ENCODE measurements at regions of chr6 and their contacts with region 1.

Region 1: GRCh38 chr6:144215932-144216667 is 65.8 kb downstream of the STX11 start:
- DNase-seq: peak; percentile 94
- ATAC-seq: peak; percentile 82
- H3K4me3 ChIP-seq: peak overlapping the region; percentile 72
- H3K27ac ChIP-seq: peak overlapping the region; percentile 61
- H3K4me1 ChIP-seq: peaks cover 15% of the 10 kb centered on the region
- H3K27me3 ChIP-seq: no peaks in the 10 kb centered on the region
- CTCF ChIP-seq: peak; percentile 66

Region 2: GRCh38 chr6:144104898-144105487 is 111.1 kb before region 1 on chr6:
- CTCF ChIA-PET with region 1: interaction called, 3 read pairs
- POLR2A ChIA-PET with region 1: no interaction called
- intact Hi-C with region 1: loop called (anchors 1 kb)
- DNase-seq: peak; percentile 81
- ATAC-seq: peak; percentile 79
- H3K4me3 ChIP-seq: no peak overlapping the region
- H3K27ac ChIP-seq: no peak overlapping the region
- H3K4me1 ChIP-seq: no peaks in the 10 kb centered on the region
- H3K27me3 ChIP-seq: no peaks in the 10 kb centered on the region
- CTCF ChIP-seq: peak; percentile 80

Region 3: GRCh38 chr6:144190593-144190992 is 25.5 kb before region 1 on chr6:
- CTCF ChIA-PET with region 1: no interaction called
- POLR2A ChIA-PET with region 1: no interaction called
- intact Hi-C with region 1: loop called (anchors 1 kb)
- DNase-seq: peak; percentile 77
- ATAC-seq: peak; percentile 99
- H3K4me3 ChIP-seq: no peak overlapping the region
- H3K27ac ChIP-seq: no peak overlapping the region
- H3K4me1 ChIP-seq: peaks cover 16% of the 10 kb centered on the region
- H3K27me3 ChIP-seq: no peaks in the 10 kb centered on the region
- CTCF ChIP-seq: no peak; the same call in 1 of the 2 replicates

Region 4: DNA sequence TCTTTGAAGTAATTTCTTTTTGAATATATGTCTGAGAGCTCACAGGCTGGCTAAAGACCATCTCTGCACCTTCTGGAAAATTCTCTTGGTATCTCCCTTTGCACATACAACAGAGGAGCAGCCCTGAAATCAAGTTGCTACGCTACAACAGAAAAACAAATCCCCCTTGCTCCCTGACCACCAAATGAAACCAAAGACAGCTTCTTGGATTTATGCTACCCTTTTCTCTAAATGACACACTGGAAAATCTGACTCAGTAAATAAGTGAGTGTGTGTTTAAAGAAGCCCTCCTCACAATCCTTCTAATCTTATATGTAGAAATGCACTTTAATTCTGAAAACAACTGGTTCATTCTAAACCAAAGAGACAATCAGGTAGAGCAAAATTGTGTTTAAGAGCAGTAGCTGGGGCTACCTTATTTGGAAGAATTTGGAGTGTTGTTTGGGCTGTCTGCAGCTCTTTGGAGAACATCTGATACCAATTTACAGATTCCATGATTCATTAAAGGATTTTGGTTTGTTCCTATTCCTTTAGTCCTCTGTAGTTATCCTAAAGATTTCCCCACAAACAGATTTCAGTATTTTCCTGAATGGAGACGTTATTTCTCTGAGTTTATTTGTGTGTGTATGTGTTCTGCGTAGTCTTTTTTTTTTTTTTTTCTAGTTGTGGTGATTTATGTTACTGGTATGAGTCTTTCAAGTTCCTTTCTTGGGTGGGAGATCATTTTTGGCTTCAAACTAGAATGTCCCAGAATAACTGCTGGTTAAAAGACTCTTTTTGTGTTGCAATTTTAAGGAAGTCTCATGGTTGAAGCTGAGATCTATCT is 32.6 kb after region 1 on chr6:
- CTCF ChIA-PET with region 1: no interaction called
- POLR2A ChIA-PET with region 1: no interaction called
- intact Hi-C with region 1: no loop called
- DNase-seq: peak; percentile 7
- ATAC-seq: no peak
- H3K4me3 ChIP-seq: no peak overlapping the region
- H3K27ac ChIP-seq: no peak overlapping the region
- H3K4me1 ChIP-seq: no peaks in the 10 kb centered on the region
- H3K27me3 ChIP-seq: no peaks in the 10 kb centered on the region
- CTCF ChIP-seq: no peak

Region 5: GRCh38 chr6:144265390-144265789 is 49.3 kb after region 1 on chr6:
- CTCF ChIA-PET with region 1: interaction called, 8 read pairs
- POLR2A ChIA-PET with region 1: no interaction called
- intact Hi-C with region 1: loop called (anchors 5 kb)
- DNase-seq: peak; percentile 82
- ATAC-seq: peak; percentile 35
- H3K4me3 ChIP-seq: peak overlapping the region; percentile 47
- H3K27ac ChIP-seq: peak overlapping the region; percentile 85
- H3K4me1 ChIP-seq: peaks cover 35% of the 10 kb centered on the region
- H3K27me3 ChIP-seq: no peaks in the 10 kb centered on the region
- CTCF ChIP-seq: no peak

Region 6: DNA sequence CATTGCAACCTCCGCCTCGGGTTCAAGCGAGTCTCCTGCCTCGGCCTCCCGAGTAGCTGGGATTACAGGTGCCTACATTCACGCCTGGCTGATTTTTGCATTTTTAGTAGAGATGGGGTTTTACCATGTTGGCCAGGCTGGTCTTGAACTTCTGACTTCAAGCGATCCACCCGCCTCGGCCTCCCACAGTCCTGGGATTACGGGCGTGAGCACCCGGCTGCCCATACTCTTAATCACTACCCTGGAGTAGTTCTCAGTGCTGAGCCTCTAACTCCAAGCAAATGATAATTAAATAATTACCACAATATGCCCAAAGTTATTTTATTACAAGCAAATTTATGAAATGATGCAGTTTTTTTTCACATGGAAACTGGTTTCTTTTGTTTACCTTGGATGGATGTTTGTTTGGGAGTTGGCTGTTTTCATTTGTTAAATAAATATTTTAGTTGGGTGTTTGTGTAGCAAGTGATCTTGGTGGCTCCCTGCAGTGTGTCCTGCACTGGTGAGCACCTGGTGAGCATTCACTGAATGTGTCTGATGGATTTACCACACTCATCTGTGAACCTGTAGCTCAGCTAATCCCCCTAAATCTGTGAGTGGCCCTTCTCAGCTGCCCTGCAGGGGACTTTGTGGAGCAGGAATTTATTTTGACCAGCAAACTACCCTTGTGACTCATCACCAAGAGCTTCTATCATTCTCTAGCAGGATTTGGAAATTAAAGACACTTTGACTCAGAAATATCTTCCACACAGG is 105.9 kb after region 1 on chr6:
- CTCF ChIA-PET with region 1: no interaction called
- POLR2A ChIA-PET with region 1: no interaction called
- intact Hi-C with region 1: loop called (anchors 1 kb)
- DNase-seq: peak; percentile 68
- ATAC-seq: peak; percentile 84
- H3K4me3 ChIP-seq: peak overlapping the region; percentile 42
- H3K27ac ChIP-seq: peak overlapping the region; percentile 66
- H3K4me1 ChIP-seq: peaks cover 16% of the 10 kb centered on the region
- H3K27me3 ChIP-seq: no peaks in the 10 kb centered on the region
- CTCF ChIP-seq: 0 out of 2 replicates have a peak, but pooled peaks have one; percentile 8

Region 7: DNA sequence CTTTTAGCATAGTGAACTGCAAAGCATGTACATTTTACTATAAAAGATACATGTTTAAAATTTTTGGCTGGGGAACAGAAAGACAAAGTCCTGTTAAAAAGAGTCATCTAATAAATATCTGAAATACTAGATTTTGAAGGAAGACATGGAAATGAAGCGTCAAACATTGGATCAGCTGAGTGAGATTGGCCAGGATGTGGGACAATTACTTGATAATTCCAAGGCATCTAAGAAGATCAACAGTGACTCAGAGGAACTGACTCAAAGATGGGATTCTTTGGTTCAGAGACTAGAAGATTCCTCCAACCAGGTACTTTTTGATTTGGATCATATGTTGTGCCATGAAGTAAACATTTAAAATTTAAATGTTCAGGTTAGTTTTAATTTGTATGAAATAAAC is 231.4 kb after region 1 on chr6:
- CTCF ChIA-PET with region 1: interaction called, 3 read pairs
- POLR2A ChIA-PET with region 1: no interaction called
- intact Hi-C with region 1: loop called (anchors 5 kb)
- DNase-seq: peak; percentile 88
- ATAC-seq: peak; percentile 92
- H3K4me3 ChIP-seq: no peak overlapping the region
- H3K27ac ChIP-seq: peak overlapping the region; percentile 69
- H3K4me1 ChIP-seq: peaks cover 31% of the 10 kb centered on the region
- H3K27me3 ChIP-seq: no peaks in the 10 kb centered on the region
- CTCF ChIP-seq: no peak

Region 8: DNA sequence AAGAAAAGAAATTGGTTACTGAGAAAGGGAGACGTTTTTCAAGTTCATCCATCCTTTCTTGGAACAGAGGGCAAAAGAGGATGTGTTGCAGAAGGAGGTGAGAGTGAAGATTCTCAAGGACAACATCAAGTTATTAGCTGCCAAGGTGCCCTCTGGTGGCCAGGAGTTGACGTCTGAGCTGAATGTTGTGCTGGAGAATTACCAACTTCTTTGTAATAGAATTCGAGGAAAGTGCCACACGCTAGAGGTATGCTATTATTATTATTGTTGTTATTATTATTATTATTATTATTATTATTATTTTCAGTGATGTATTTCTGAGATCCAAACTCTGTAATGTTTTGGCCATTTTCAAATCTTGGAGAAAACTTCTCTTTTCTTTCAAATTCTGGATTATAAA is 266.0 kb after region 1 on chr6:
- CTCF ChIA-PET with region 1: interaction called, 3 read pairs
- POLR2A ChIA-PET with region 1: no interaction called
- intact Hi-C with region 1: loop called (anchors 1 kb)
- DNase-seq: peak; percentile 81
- ATAC-seq: peak; percentile 46
- H3K4me3 ChIP-seq: no peak overlapping the region
- H3K27ac ChIP-seq: no peak overlapping the region
- H3K4me1 ChIP-seq: no peaks in the 10 kb centered on the region
- H3K27me3 ChIP-seq: no peaks in the 10 kb centered on the region
- CTCF ChIP-seq: peak; percentile 61